Panc1 (cell line): ENCODE measurements at regions of chr5 and their contacts with region 1.

Region 1: DNA sequence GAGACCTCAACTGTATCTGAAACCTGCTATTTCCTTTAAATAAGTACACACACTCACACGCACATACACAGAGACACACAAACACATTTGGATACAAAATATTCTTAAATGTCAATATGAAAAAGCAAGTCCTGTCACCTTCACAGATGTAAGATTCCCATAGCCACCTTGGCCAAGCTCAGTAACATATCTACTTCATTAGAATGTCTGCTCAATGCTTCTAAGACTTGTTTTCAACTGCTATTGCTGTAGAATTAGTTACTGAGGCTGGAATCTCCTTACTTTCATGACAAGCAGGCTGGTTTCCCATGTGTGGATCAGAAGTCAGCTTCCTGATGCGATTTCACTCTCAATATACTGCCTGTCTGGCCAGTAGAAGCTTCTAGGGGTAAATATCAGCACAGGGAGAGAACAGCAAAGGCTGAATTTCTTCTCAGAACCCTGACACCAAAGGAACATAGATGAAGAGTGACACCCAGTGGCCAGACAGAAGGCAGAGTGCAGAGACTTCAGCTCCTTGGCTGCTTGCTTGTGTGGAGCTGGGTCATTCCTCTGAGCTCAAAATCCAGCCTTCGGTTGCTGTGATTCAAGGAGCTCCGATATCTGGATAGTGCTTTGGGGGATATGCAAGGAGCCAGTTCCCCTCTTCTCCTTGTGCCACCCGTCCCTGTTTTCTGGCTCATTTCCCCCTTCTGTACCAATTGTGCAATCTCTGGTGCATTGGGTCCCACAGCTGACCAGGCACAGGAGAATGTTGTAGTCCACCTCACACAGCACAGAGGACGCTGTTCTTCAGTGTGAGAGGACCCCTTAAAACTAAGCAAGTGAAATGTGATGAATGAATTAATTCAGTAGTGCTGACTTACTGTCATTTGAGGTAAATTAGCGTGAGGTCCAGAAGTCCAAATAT is 26.6 kb upstream of the ABLIM3 start:
- DNase-seq: peak; percentile 78
- ATAC-seq: peak; percentile 99
- H3K4me3 ChIP-seq: no peak overlapping the region
- H3K27ac ChIP-seq: no peak overlapping the region
- H3K4me1 ChIP-seq: no peaks in the 10 kb centered on the region
- H3K27me3 ChIP-seq: peaks cover under 1% of the 10 kb centered on the region; the same call in 1 of the 2 replicates
- CTCF ChIP-seq: peak; percentile 87

Region 2: GRCh38 chr5:148740966-148741742 is 373.5 kb before region 1 on chr5:
- CTCF ChIA-PET with region 1: interaction called, 21 read pairs
- POLR2A ChIA-PET with region 1: no interaction called
- in situ Hi-C with region 1: no loop called
- intact Hi-C with region 1: no loop called
- DNase-seq: peak; percentile 69
- ATAC-seq: peak; percentile 73
- H3K4me3 ChIP-seq: no peak overlapping the region
- H3K27ac ChIP-seq: no peak overlapping the region
- H3K4me1 ChIP-seq: no peaks in the 10 kb centered on the region
- H3K27me3 ChIP-seq: no peaks in the 10 kb centered on the region
- CTCF ChIP-seq: peak; percentile 76; the same call in 1 of the 2 replicates

Region 3: DNA sequence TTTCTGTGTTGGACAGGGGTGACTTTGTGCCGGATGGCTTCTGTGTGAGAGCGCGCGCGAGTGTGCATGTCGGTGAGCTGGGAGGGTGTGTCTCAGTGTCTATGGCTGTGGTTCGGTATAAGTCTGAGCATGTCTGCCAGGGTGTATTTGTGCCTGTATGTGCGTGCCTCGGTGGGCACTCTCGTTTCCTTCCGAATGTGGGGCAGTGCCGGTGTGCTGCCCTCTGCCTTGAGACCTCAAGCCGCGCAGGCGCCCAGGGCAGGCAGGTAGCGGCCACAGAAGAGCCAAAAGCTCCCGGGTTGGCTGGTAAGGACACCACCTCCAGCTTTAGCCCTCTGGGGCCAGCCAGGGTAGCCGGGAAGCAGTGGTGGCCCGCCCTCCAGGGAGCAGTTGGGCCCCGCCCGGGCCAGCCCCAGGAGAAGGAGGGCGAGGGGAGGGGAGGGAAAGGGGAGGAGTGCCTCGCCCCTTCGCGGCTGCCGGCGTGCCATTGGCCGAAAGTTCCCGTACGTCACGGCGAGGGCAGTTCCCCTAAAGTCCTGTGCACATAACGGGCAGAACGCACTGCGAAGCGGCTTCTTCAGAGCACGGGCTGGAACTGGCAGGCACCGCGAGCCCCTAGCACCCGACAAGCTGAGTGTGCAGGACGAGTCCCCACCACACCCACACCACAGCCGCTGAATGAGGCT is 288.5 kb before region 1 on chr5 and contains the start of gene ADRB2:
- CTCF ChIA-PET with region 1: interaction called, 3 read pairs
- POLR2A ChIA-PET with region 1: interaction called, 7 read pairs
- in situ Hi-C with region 1: no loop called
- intact Hi-C with region 1: loop called (anchors 10 kb)
- DNase-seq: peak; percentile 71
- ATAC-seq: peak; percentile 98
- H3K4me3 ChIP-seq: peak within 1 kb of the TSS; percentile 56 to 86
- H3K27ac ChIP-seq: no peak within 1 kb of the TSS; the same call in 1 of the 2 replicates
- H3K4me1 ChIP-seq: peaks cover 10% of the 10 kb centered on the region; the same call in 1 of the 2 replicates
- H3K27me3 ChIP-seq: no peaks in the 10 kb centered on the region; the same call in 1 of the 2 replicates
- CTCF ChIP-seq: no peak
- total RNA-seq, gene ADRB2: 1.0 TPM

Region 4: GRCh38 chr5:148912714-148913398 is 201.8 kb before region 1 on chr5:
- CTCF ChIA-PET with region 1: no interaction called
- POLR2A ChIA-PET with region 1: no interaction called
- in situ Hi-C with region 1: no loop called
- intact Hi-C with region 1: loop called (anchors 10 kb)
- DNase-seq: peak; percentile 78
- ATAC-seq: peak; percentile 85
- H3K4me3 ChIP-seq: peak overlapping the region in 1 of 2 experiments; percentile 26; a peak in 2 of 4 replicates
- H3K27ac ChIP-seq: peak overlapping the region; percentile 21; the same call in 1 of the 2 replicates
- H3K4me1 ChIP-seq: peaks cover 8% of the 10 kb centered on the region
- H3K27me3 ChIP-seq: no peaks in the 10 kb centered on the region
- CTCF ChIP-seq: peak; percentile 78

Region 5: DNA sequence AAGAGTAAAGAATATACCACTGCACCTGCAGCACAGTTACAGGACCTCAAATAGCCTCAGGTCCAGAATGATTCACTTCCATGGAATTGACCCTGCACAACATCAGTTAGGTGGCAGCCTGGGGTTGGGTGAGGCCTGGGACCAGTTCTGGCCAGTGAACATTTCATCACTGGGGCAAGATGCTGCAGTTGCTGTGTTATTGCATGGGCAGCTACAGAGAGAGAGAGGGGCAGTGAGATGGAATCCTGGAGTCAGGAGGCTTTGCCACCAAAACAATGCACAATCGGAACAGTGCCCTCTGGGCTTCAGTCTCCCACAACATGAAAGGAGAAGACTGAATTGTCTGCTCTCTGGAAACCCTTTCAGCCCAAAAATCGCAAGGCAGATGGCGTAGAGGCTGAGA is 103.6 kb before region 1 on chr5:
- CTCF ChIA-PET with region 1: no interaction called
- POLR2A ChIA-PET with region 1: no interaction called
- in situ Hi-C with region 1: no loop called
- intact Hi-C with region 1: no loop called
- DNase-seq: no peak
- ATAC-seq: peak; percentile 72
- H3K4me3 ChIP-seq: no peak overlapping the region
- H3K27ac ChIP-seq: no peak overlapping the region
- H3K4me1 ChIP-seq: no peaks in the 10 kb centered on the region
- H3K27me3 ChIP-seq: no peaks in the 10 kb centered on the region
- CTCF ChIP-seq: no peak

Region 6: DNA sequence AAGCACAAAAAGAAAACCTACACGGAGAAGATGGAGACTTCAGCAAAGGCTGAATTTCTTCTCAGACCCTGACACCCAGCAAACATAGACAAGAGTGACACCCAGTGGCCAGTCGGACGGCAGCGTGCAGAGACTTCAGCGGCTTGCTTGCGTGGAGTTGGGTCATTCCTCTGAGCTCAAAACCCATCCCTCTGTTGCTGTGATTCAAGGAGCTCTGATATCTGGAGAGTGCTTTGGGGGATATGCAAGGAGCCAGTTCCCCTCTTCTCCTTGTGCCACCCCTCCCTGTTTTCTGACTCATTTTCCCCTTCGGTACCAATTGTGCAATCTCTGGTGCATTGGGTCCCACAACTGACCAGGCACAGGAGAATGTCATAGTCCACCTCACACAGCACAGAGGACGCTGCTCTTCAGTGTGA is 79.3 kb before region 1 on chr5:
- CTCF ChIA-PET with region 1: interaction called, 10 read pairs
- POLR2A ChIA-PET with region 1: no interaction called
- in situ Hi-C with region 1: no loop called
- intact Hi-C with region 1: loop called (anchors 2 kb)
- DNase-seq: peak; percentile 71
- ATAC-seq: peak; percentile 98
- H3K4me3 ChIP-seq: no peak overlapping the region
- H3K27ac ChIP-seq: no peak overlapping the region
- H3K4me1 ChIP-seq: no peaks in the 10 kb centered on the region
- H3K27me3 ChIP-seq: no peaks in the 10 kb centered on the region
- CTCF ChIP-seq: peak; percentile 91

Region 7: GRCh38 chr5:149128023-149128875 is 13.6 kb after region 1 on chr5:
- CTCF ChIA-PET with region 1: interaction called, 12 read pairs
- POLR2A ChIA-PET with region 1: no interaction called
- in situ Hi-C with region 1: no loop called
- intact Hi-C with region 1: no loop called
- DNase-seq: no peak
- ATAC-seq: peak; percentile 88
- H3K4me3 ChIP-seq: no peak overlapping the region
- H3K27ac ChIP-seq: no peak overlapping the region
- H3K4me1 ChIP-seq: no peaks in the 10 kb centered on the region
- H3K27me3 ChIP-seq: no peaks in the 10 kb centered on the region
- CTCF ChIP-seq: peak; percentile 94